PC-9 (cell line): ENCODE measurements at regions of chr3 and their contacts with region 1.

Region 1: GRCh38 chr3:185733980-185734724 is 90.7 kb downstream of the IGF2BP2 start:
- DNase-seq: peak; percentile 73 to 85
- H3K4me3 ChIP-seq: no peak overlapping the region
- H3K27ac ChIP-seq: peak overlapping the region; percentile 23
- H3K4me1 ChIP-seq: peaks cover 65% of the 10 kb centered on the region
- H3K27me3 ChIP-seq: no peaks in the 10 kb centered on the region
- CTCF ChIP-seq: peak; percentile 90

Region 2: DNA sequence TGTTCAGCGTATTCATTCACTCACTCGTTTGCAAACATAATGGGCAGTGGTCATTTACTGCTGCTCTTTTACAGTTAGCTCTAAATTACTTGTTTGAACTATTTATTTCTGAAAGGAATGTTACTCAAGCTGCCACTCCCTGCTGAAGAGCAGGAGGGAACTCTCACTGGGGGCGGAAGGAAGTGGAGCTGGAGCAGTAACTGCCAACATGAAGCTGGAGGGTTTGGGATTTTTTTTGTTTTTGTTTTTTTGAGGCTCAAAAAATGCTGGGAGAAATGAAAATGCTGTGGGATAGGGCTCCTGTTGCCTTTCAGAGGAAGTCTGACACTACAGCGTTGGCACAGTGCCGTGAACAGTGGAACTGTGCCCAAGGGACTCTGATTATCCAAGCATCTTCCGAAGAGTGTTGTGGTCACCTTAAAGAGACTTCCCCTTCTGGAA is 104.0 kb before region 1 on chr3:
- CTCF ChIA-PET with region 1: no interaction called
- POLR2A ChIA-PET with region 1: no interaction called
- intact Hi-C with region 1: no loop called
- DNase-seq: peak in 1 of 2 experiments; percentile 33
- H3K4me3 ChIP-seq: no peak overlapping the region
- H3K27ac ChIP-seq: 0 out of 2 replicates have a peak overlapping the region, but pooled peaks have one; percentile 4
- H3K4me1 ChIP-seq: no peaks in the 10 kb centered on the region
- H3K27me3 ChIP-seq: no peaks in the 10 kb centered on the region
- CTCF ChIP-seq: no peak

Region 3: GRCh38 chr3:185677146-185677829 is 56.9 kb before region 1 on chr3:
- CTCF ChIA-PET with region 1: interaction called, 3 read pairs
- POLR2A ChIA-PET with region 1: no interaction called
- intact Hi-C with region 1: loop called (anchors 1 kb)
- DNase-seq: peak; percentile 72 to 95
- H3K4me3 ChIP-seq: no peak overlapping the region
- H3K27ac ChIP-seq: peak overlapping the region; percentile 36
- H3K4me1 ChIP-seq: peaks cover 4% of the 10 kb centered on the region
- H3K27me3 ChIP-seq: no peaks in the 10 kb centered on the region
- CTCF ChIP-seq: peak; percentile 97

Region 4: GRCh38 chr3:185796431-185797107 is 62.4 kb after region 1 on chr3:
- CTCF ChIA-PET with region 1: interaction called, 11 read pairs
- POLR2A ChIA-PET with region 1: no interaction called
- intact Hi-C with region 1: loop called (anchors 2 kb)
- DNase-seq: peak; percentile 86 to 100
- H3K4me3 ChIP-seq: 0 out of 2 replicates have a peak overlapping the region, but pooled peaks have one; percentile 10
- H3K27ac ChIP-seq: peak overlapping the region; percentile 93
- H3K4me1 ChIP-seq: peaks cover 63% of the 10 kb centered on the region
- H3K27me3 ChIP-seq: no peaks in the 10 kb centered on the region
- CTCF ChIP-seq: no peak

Region 5: GRCh38 chr3:185924375-185924774 is 190.2 kb after region 1 on chr3:
- CTCF ChIA-PET with region 1: interaction called, 3 read pairs
- POLR2A ChIA-PET with region 1: interaction called, 18 read pairs
- intact Hi-C with region 1: loop called (anchors 2 kb)
- DNase-seq: no peak
- H3K4me3 ChIP-seq: no peak overlapping the region
- H3K27ac ChIP-seq: no peak overlapping the region
- H3K4me1 ChIP-seq: peaks cover 23% of the 10 kb centered on the region
- H3K27me3 ChIP-seq: no peaks in the 10 kb centered on the region
- CTCF ChIP-seq: no peak

Region 6: GRCh38 chr3:185959609-185960517 is 225.7 kb after region 1 on chr3:
- CTCF ChIA-PET with region 1: no interaction called
- POLR2A ChIA-PET with region 1: no interaction called
- intact Hi-C with region 1: loop called (anchors 5 kb)
- DNase-seq: peak; percentile 74 to 91
- H3K4me3 ChIP-seq: peak overlapping the region; percentile 77
- H3K27ac ChIP-seq: peak overlapping the region; percentile 96
- H3K4me1 ChIP-seq: peaks cover 49% of the 10 kb centered on the region
- H3K27me3 ChIP-seq: no peaks in the 10 kb centered on the region
- CTCF ChIP-seq: peak; percentile 11; the same call in 1 of the 2 replicates